ENCODE measurements at regions of chr2 and their contacts with region 1.

Region 1: GRCh38 chr2:88187038-88187676 is 17.0 kb downstream of the THNSL2 start:
- DNase-seq: no peak
- H3K4me3 ChIP-seq: no peak overlapping the region
- CTCF ChIP-seq: peak; percentile 78

Region 2: GRCh38 chr2:88133875-88134274 is 53.3 kb before region 1 on chr2:
- CTCF ChIA-PET with region 1: no interaction called
- POLR2A ChIA-PET with region 1: no interaction called
- DNase-seq: no peak
- H3K4me3 ChIP-seq: no peak overlapping the region
- CTCF ChIP-seq: no peak

Region 3: GRCh38 chr2:88199912-88200682 is 12.9 kb after region 1 on chr2:
- CTCF ChIA-PET with region 1: interaction called, 19 read pairs
- POLR2A ChIA-PET with region 1: no interaction called
- DNase-seq: no peak
- H3K4me3 ChIP-seq: no peak overlapping the region; the same call in 1 of the 2 replicates
- CTCF ChIP-seq: no peak

Region 4: DNA sequence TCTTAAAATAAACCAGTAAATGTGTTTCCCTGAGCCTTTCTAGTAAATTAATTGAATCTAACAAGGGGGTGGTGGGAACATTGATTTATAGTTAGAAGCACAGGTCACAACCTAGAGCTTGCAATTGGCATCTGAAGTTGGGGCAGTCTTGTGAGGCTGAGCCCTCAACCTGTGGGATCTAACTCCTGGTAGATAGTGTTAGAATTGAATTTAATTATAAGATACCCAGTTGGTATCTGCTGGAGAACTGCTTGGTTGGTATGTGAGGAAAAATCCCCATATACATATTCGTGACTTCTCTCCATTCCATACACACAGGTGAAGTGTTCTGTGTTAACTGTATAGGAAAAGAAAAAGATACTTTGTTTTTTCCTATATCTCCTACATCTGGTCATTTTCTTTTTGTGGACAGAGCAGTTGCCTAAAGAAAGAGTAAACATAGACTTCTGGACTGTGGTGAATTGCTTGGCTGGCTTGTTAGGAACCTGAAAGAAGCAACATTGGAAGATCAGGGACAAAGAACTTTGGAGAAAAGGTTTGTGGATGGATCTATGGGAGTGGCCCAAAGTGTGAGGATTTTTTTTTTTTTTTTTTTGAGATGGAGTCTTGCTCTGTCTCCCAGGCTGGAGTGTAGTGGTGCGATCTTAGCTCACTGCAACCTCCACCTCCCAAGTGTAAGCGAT is 19.6 kb after region 1 on chr2:
- CTCF ChIA-PET with region 1: interaction called, 19 read pairs
- POLR2A ChIA-PET with region 1: no interaction called
- DNase-seq: no peak
- H3K4me3 ChIP-seq: no peak overlapping the region
- CTCF ChIP-seq: no peak

Region 5: GRCh38 chr2:88212251-88212790 is 25.2 kb after region 1 on chr2:
- CTCF ChIA-PET with region 1: interaction called, 14 read pairs
- POLR2A ChIA-PET with region 1: no interaction called
- DNase-seq: no peak
- H3K4me3 ChIP-seq: no peak overlapping the region
- CTCF ChIP-seq: peak; percentile 51

Region 6: GRCh38 chr2:88239781-88240180 is 52.6 kb after region 1 on chr2:
- CTCF ChIA-PET with region 1: no interaction called
- POLR2A ChIA-PET with region 1: no interaction called
- DNase-seq: no peak
- H3K4me3 ChIP-seq: no peak overlapping the region
- CTCF ChIP-seq: no peak

Region 7: DNA sequence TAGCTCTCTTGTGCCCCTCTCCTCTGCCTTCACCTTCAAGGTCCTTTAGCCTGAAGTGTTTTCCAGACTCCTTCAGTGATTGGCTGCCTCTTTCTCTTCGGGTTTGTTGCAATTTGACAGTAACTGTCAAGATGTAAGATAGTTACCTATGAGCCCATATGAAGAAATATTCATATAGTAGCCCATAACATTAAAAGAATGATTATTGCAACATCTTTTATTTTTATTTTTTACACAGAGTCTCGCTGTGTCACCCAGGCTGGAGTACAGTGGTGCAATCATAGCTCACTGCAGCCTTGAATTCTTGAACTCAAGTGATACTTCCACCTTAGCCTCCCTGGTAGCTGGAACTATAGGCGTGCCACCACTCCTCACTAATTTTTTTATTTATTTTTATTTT is 184.9 kb after region 1 on chr2:
- CTCF ChIA-PET with region 1: no interaction called
- POLR2A ChIA-PET with region 1: no interaction called
- DNase-seq: no peak
- H3K4me3 ChIP-seq: no peak overlapping the region
- CTCF ChIP-seq: no peak